ENCODE measurements at regions of chr12 and their contacts with region 1.

Region 1: GRCh38 chr12:64656429-64656828 is 46.1 kb downstream of the RASSF3 start:
- DNase-seq: peak; percentile 65 to 69
- H3K4me3 ChIP-seq: no peak overlapping the region
- H3K4me3 Mint-ChIP-seq: peak overlapping the region; percentile 12
- H3K27ac Mint-ChIP-seq: peak overlapping the region; percentile 36
- H3K4me1 ChIP-seq: peaks cover 46% of the 10 kb centered on the region
- H3K4me1 Mint-ChIP-seq: peaks cover 18% of the 10 kb centered on the region
- H3K27me3 ChIP-seq: no peaks in the 10 kb centered on the region
- H3K27me3 Mint-ChIP-seq: no peaks in the 10 kb centered on the region
- CTCF ChIP-seq: no peak

Region 2: GRCh38 chr12:64510667-64511066 is 145.8 kb before region 1 on chr12:
- CTCF ChIA-PET with region 1: no interaction called
- POLR2A ChIA-PET with region 1: no interaction called
- intact Hi-C with region 1: no loop called
- DNase-seq: no peak
- H3K4me3 ChIP-seq: no peak overlapping the region
- H3K4me3 Mint-ChIP-seq: no peak overlapping the region
- H3K27ac Mint-ChIP-seq: no peak overlapping the region
- H3K4me1 ChIP-seq: peaks cover 3% of the 10 kb centered on the region
- H3K4me1 Mint-ChIP-seq: no peaks in the 10 kb centered on the region
- H3K27me3 ChIP-seq: no peaks in the 10 kb centered on the region
- H3K27me3 Mint-ChIP-seq: no peaks in the 10 kb centered on the region
- CTCF ChIP-seq: no peak

Region 3: DNA sequence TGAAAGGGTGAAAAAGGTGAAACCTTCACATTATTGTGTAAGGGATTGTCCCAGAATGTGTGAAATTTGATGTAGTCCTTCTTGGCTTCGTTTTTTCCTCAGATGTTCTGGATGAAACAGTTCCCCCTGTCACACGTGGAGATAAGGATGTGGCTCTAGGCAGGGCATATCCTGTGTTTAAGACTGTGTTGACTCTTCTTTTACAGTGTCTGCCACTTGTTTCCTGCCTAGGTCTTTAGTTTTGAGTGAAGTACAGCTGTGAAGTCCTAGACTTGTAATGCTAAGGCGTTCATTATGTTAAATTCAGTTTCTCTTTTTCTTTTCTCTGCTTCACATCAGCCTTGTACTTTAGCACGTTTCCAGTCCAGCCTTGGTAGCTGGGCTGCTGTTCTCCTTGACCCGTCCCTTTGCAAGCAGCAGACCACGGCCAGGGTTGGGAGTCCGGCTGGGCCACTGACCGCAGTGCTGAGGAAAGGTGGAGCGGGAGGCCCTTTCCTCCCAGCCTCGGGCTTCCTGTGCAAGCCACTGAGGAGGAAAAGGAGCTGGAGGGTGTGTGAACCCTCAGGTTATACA is 12.9 kb after region 1 on chr12:
- CTCF ChIA-PET with region 1: no interaction called
- POLR2A ChIA-PET with region 1: no interaction called
- intact Hi-C with region 1: loop called (anchors 1 kb)
- DNase-seq: peak in 1 of 2 experiments; percentile 45
- H3K4me3 ChIP-seq: no peak overlapping the region
- H3K4me3 Mint-ChIP-seq: peak overlapping the region; percentile 27
- H3K27ac Mint-ChIP-seq: peak overlapping the region; percentile 57
- H3K4me1 ChIP-seq: peaks cover 91% of the 10 kb centered on the region
- H3K4me1 Mint-ChIP-seq: peaks cover 59% of the 10 kb centered on the region
- H3K27me3 ChIP-seq: no peaks in the 10 kb centered on the region
- H3K27me3 Mint-ChIP-seq: no peaks in the 10 kb centered on the region
- CTCF ChIP-seq: no peak